ENCODE measurements at regions of chr1 and their contacts with region 1.

Region 1: DNA sequence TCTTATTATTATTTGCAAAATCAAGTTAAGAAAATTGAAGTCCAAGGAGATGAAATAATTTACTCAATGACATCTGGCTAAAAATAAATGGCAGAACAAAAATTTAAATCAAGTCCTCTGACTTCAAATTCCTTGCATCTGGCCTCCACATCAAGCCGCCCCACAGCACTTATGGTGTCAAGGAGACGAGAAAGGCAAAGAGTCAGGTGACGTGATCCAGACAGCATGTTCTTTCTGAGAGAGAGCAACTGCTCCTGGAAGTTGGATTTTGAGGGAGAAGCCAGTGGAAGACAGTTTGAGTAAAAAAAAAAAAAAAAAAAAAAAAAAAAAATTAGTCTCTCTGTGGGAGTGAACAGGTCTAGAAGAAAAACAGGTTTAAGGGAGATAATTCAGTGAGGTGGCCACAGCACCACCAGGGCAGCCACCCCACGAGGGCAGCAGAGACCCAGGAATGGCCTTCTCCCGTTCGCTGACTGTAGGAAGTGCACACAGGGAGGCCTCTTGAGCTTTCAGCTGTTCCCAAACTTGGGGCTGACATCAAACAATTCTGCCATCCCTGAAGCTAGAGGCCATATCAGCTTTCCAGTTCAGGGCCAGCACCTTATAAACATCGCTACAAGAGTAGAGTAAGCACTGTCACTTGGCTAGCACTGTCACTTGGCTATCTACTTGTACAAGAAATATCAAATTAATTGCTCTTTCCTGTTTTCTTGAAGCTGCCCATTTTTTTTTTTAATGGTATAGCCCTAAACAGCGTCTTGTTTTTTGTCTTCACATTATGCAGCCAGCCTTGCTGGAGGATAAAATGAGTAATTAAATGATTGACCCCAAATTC is 7.8 kb downstream of the C1orf162 start:
- DNase-seq: peak; percentile 42
- ATAC-seq: peak; percentile 97
- H3K4me3 ChIP-seq: no peak overlapping the region
- H3K27ac ChIP-seq: no peak overlapping the region
- H3K4me1 ChIP-seq: no peaks in the 10 kb centered on the region
- H3K27me3 ChIP-seq: no peaks in the 10 kb centered on the region
- CTCF ChIP-seq: peak; percentile 59 to 84 (median 67)
- POLR2A ChIP-seq: no peak
- RAD21 ChIP-seq: peak; percentile 88

Region 2: GRCh38 chr1:111507411-111508201 is 26.0 kb after region 1 on chr1:
- CTCF ChIA-PET with region 1: interaction called, 14 read pairs
- POLR2A ChIA-PET with region 1: no interaction called
- RAD21 ChIA-PET with region 1: interaction called in 1 of 2 experiments, 3 read pairs
- intact Hi-C with region 1: no loop called
- DNase-seq: no peak
- ATAC-seq: peak; percentile 80
- H3K4me3 ChIP-seq: peak overlapping the region; percentile 2 to 49; a peak in 3 of 4 replicates
- H3K27ac ChIP-seq: peak overlapping the region; percentile 63
- H3K4me1 ChIP-seq: peaks cover 9 to 16% of the 10 kb centered on the region in 2 experiments
- H3K27me3 ChIP-seq: no peaks in the 10 kb centered on the region
- CTCF ChIP-seq: no peak; a peak in 1 of 6 replicates
- POLR2A ChIP-seq: no peak
- RAD21 ChIP-seq: no peak

Region 3: GRCh38 chr1:111747282-111747734 is 265.7 kb after region 1 on chr1:
- CTCF ChIA-PET with region 1: interaction called, 39 read pairs
- POLR2A ChIA-PET with region 1: interaction called, 3 read pairs
- RAD21 ChIA-PET with region 1: interaction called, 3 to 7 read pairs
- intact Hi-C with region 1: loop called (anchors 1 kb)
- DNase-seq: peak; percentile 90
- ATAC-seq: peak; percentile 96
- H3K4me3 ChIP-seq: no peak overlapping the region
- H3K27ac ChIP-seq: no peak overlapping the region
- H3K4me1 ChIP-seq: peaks cover 0 to 8% of the 10 kb centered on the region in 2 experiments; a peak in 2 of 4 replicates
- H3K27me3 ChIP-seq: peaks cover 4% of the 10 kb centered on the region; the same call in 1 of the 2 replicates
- CTCF ChIP-seq: peak; percentile 78 to 99 (median 81)
- POLR2A ChIP-seq: no peak
- RAD21 ChIP-seq: peak; percentile 86

Region 4: GRCh38 chr1:111990878-111991718 is 509.5 kb after region 1 on chr1:
- CTCF ChIA-PET with region 1: no interaction called
- POLR2A ChIA-PET with region 1: no interaction called
- RAD21 ChIA-PET with region 1: no interaction called
- intact Hi-C with region 1: loop called (anchors 5 kb)
- DNase-seq: peak; percentile 54
- ATAC-seq: peak; percentile 84
- H3K4me3 ChIP-seq: peak overlapping the region; percentile 31 to 60
- H3K27ac ChIP-seq: no peak overlapping the region
- H3K4me1 ChIP-seq: peaks cover 9 to 20% of the 10 kb centered on the region in 2 experiments; a peak in 3 of 4 replicates
- H3K27me3 ChIP-seq: peaks cover 23% of the 10 kb centered on the region; the same call in 1 of the 2 replicates
- CTCF ChIP-seq: peak; percentile 34 to 57 (median 49); a peak in 5 of 6 replicates
- POLR2A ChIP-seq: no peak
- RAD21 ChIP-seq: peak; percentile 61